Activated T-helper 2 cell treated with anti-CD3 and anti-CD28 coated beads, Interferon-gamma antibody, Interleukin-2, Interleukin-4, amounts not matched to agents 10 μg/mL and 5 μg/mL and 100 μg/mL, durations not matched to agents 14 hours and 24 hours and 36 hours (primary cell): ENCODE measurements at regions of chr6 and their contacts with region 1.

Region 1: DNA sequence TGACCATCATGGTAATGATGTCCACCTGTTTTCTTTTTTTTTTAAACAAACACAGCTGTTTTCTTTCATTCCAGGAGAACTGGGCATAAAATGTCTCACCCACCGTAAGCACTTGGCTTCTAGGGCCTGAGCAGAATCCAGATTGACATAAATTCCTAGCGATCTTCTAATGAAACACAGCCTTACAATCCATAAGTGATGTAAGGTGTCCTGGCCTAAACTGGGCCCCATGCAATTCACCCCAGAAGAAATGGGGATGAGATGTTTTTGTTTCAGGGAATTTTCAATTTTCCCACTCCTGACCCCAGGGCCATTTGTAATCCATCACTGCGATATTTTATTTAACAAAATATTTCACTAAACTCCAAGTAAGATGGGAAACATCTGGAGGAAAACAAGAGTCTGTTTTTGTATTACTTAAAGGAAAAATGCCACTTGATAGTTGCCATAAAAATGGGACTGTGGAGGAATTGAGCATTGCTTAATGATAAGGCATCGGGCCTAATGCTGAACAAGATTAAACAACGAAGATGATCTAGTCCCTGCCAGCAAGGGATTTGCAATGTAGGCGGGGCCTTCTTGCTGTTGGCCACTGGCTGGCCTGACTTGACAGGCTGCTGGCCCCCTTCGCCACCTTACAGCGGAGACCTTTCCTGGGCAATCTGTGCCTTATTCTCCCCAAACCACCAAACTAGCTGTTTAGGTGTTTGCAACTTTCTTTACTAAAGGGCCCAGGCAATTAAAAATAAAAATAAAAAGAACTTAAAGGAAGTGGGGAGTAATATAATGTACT is 183.7 kb downstream of the CD109 start:
- DNase-seq: no peak
- H3K4me3 Mint-ChIP-seq: no peak overlapping the region
- H3K27ac Mint-ChIP-seq: no peak overlapping the region
- H3K4me1 Mint-ChIP-seq: no peaks in the 10 kb centered on the region
- H3K27me3 Mint-ChIP-seq: no peaks in the 10 kb centered on the region

Region 2: DNA sequence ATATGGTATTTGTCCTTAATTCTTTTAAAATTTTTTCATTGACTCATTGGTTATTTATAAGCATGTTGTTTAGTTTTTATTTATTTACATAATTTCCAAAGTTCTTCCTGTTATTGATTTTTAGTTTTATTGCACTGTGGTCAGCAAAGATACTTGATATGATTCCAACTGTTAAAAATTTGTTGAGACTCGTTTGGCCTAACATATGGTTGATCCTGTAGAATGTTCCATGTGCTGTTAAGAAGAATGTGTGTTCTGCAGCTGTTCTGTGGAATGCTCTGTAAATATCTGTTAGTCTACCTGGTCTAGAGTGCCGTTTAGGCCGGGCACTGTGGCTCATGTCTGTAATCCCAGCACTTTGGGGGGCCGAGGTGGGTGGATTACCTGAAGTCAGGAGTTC is 14.0 kb after region 1 on chr6:
- intact Hi-C with region 1: loop called (anchors 1 kb)
- DNase-seq: no peak
- H3K4me3 Mint-ChIP-seq: no peak overlapping the region
- H3K27ac Mint-ChIP-seq: no peak overlapping the region
- H3K4me1 Mint-ChIP-seq: no peaks in the 10 kb centered on the region
- H3K27me3 Mint-ChIP-seq: no peaks in the 10 kb centered on the region

Region 3: DNA sequence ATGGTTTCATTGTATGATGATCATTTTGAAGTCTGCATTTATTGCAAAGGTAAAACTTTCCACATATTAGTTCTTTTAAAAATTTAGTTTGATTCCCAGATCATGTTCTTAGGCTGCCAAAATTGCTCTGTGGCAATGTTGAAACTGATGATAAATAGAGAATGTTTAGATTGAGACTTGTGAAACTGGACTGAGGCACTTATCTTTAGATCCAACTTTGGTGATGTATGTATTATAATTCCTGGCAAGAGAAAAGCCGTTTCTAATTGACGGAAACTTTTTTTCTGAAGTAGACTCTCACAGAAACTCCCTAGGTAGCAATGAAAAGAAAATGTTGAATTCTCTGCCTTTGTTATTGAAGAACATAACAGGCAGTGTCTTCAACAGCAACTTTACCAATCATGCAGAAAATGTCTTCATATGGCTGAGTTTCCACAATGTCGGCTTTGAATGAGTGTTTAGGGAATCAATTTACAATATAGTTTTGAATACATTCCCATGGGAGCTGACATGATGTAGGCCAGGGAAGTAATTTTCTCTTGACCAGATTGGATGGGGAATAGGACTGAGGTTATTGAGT is 272.5 kb after region 1 on chr6:
- intact Hi-C with region 1: no loop called
- DNase-seq: no peak
- H3K4me3 Mint-ChIP-seq: no peak overlapping the region
- H3K27ac Mint-ChIP-seq: no peak overlapping the region
- H3K4me1 Mint-ChIP-seq: no peaks in the 10 kb centered on the region
- H3K27me3 Mint-ChIP-seq: no peaks in the 10 kb centered on the region

Region 4: DNA sequence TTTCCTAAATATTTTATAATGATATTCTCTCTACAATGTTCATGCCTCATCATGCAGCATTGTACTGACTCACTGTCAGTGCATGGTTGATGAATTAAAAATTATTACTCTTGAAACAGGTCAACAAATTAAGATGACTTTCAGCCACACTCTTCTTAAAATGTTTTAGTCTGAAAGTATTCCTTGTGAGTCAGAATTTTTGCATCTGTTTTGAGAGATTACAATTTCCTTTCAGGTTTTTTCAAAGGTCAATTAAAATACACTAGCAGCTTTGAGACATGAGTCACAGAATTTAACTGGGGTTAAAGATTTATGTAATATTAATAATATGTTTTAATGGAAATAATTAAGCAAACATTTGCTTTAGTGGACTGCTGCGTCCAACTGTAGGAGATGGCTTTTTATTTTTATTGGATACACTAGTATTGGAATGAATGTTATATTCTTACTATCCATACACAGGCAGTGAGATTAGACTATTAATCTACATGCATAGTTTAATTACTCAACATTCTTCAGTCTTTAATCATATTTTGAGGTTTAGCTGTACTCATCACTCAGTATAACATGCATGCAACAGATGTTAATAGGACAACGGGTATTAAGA is 1316.5 kb after region 1 on chr6:
- intact Hi-C with region 1: no loop called
- DNase-seq: no peak
- H3K4me3 Mint-ChIP-seq: no peak overlapping the region
- H3K27ac Mint-ChIP-seq: no peak overlapping the region
- H3K4me1 Mint-ChIP-seq: peaks cover 2% of the 10 kb centered on the region
- H3K27me3 Mint-ChIP-seq: peaks cover 14% of the 10 kb centered on the region